Ascending aorta (tissue), 2 donors: ENCODE measurements at regions of chr15 and their contacts with region 1.

Region 1: GRCh38 chr15:40564591-40565332 is at the start of gene CCDC32:
- DNase-seq: peak; percentile 98 to 99
- H3K4me3 ChIP-seq: peak within 1 kb of the TSS; percentile 78 to 82
- H3K27ac ChIP-seq: peak within 1 kb of the TSS; percentile 96 to 97
- H3K4me1 ChIP-seq: peaks cover 0 to 14% of the 10 kb centered on the region in 2 donors
- H3K27me3 ChIP-seq: no peaks in the 10 kb centered on the region
- CTCF ChIP-seq: no peak
- total RNA-seq, gene CCDC32: 16.4 TPM

Region 2: GRCh38 chr15:40405501-40406381 is 159.0 kb before region 1 on chr15 and contains the start of gene IVD:
- intact Hi-C with region 1: loop called (anchors 1 kb)
- DNase-seq: peak; percentile 72 to 97
- H3K4me3 ChIP-seq: peak within 1 kb of the TSS; percentile 73 to 98
- H3K27ac ChIP-seq: peak within 1 kb of the TSS; percentile 75 to 80
- H3K4me1 ChIP-seq: peaks cover 15 to 17% of the 10 kb centered on the region in 2 donors
- H3K27me3 ChIP-seq: no peaks in the 10 kb centered on the region
- CTCF ChIP-seq: no peak
- total RNA-seq, gene IVD: 39.5 TPM

Region 3: DNA sequence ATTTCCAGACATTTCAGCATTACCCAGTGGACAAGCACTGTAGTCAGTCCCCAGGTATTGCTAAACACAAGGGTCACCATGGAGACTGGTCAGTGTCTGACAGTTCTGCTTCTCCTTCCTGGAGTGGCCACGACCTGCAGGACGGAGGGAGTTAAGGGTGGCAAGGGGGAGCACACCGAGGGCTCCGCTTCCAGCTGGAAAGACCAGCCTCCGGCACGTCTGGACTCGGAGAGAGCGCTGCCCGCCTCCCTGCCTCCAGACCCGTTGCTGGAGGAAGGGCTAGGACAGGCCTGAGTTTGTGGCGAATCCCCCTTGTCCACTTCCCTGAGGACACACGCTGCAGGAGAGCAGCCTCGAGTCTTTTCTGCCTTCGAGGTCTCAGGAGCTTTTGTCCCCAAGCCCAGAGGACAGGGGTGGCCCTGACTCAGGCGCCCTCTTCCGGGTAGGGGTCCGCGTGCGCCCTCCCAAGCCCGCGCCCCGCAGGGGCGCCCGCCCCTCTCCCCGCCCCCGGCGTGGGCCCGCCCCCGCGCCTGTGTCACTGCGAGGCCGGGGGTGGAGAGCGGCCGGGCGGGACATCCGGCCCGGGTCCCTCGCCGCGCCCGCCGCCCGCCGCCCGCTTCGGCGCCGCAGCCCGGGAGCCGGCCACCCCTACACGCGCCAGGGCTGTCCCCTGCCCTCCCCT is 94.2 kb before region 1 on chr15 and contains the start of gene CHST14:
- intact Hi-C with region 1: loop called (anchors 5 kb)
- DNase-seq: peak in 1 of 2 donors; percentile 78
- H3K4me3 ChIP-seq: peak within 1 kb of the TSS; percentile 74 to 89
- H3K27ac ChIP-seq: peak within 1 kb of the TSS; percentile 83 to 87
- H3K4me1 ChIP-seq: peaks cover 7 to 13% of the 10 kb centered on the region in 2 donors
- H3K27me3 ChIP-seq: no peaks in the 10 kb centered on the region
- CTCF ChIP-seq: no peak
- total RNA-seq, gene CHST14: 22.0 TPM

Region 4: GRCh38 chr15:40754883-40755811 is 190.4 kb after region 1 on chr15 and contains the start of gene RMDN3:
- intact Hi-C with region 1: loop called (anchors 1 kb)
- DNase-seq: peak; percentile 62 to 95
- H3K4me3 ChIP-seq: peak within 1 kb of the TSS; percentile 95 to 98
- H3K27ac ChIP-seq: peak within 1 kb of the TSS; percentile 85 to 86
- H3K4me1 ChIP-seq: peaks cover 0 to 12% of the 10 kb centered on the region in 2 donors
- H3K27me3 ChIP-seq: no peaks in the 10 kb centered on the region
- CTCF ChIP-seq: peak in 1 of 3 experiments; percentile 17
- total RNA-seq, gene RMDN3: 6.0 TPM

Region 5: GRCh38 chr15:41230650-41231533 is 666.1 kb after region 1 on chr15 and contains the starts of genes CHP1 and EXD1:
- intact Hi-C with region 1: loop called (anchors 5 kb)
- DNase-seq: peak; percentile 89 to 99
- H3K4me3 ChIP-seq: peak within 1 kb of the TSS; percentile 70 to 89
- H3K27ac ChIP-seq: peak within 1 kb of the TSS; percentile 80 to 96
- H3K4me1 ChIP-seq: peaks cover 0 to 23% of the 10 kb centered on the region in 2 donors
- H3K27me3 ChIP-seq: no peaks in the 10 kb centered on the region
- CTCF ChIP-seq: peak; percentile 97 to 99 (median 99)
- total RNA-seq, gene CHP1: 294 TPM
- total RNA-seq, gene EXD1: not detected